BJ (cell line): ENCODE measurements at regions of chr7 and their contacts with region 1.

Region 1: GRCh38 chr7:32539919-32540531 is 44.7 kb downstream of the AVL9 start:
- DNase-seq: no peak
- H3K4me3 ChIP-seq: no peak overlapping the region
- H3K27me3 ChIP-seq: no peaks in the 10 kb centered on the region
- CTCF ChIP-seq: no peak

Region 2: DNA sequence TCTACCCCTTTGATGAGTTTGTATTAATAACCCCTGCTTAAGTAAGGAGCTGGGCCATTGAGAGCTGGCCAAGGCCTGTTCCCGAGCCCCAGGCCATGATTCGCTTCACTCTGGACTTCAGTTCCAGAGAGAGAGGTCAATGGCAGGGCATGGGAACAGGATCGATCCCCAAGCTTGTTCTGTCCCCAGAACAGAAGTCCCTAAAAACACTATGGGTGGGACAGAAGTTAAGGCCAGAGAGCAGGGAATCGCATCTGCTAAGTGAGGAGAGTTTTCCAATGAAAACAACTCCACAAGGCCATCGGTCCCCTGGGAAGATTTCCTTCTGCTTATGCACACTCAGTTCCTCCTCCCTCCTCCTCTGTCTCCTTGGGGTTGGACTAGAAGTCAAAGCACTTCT is 209.4 kb before region 1 on chr7:
- CTCF ChIA-PET with region 1: no interaction called
- POLR2A ChIA-PET with region 1: no interaction called
- DNase-seq: no peak
- H3K4me3 ChIP-seq: no peak overlapping the region
- H3K27me3 ChIP-seq: no peaks in the 10 kb centered on the region; the same call in 1 of the 2 replicates
- CTCF ChIP-seq: no peak

Region 3: GRCh38 chr7:32559480-32559879 is 19.5 kb after region 1 on chr7:
- CTCF ChIA-PET with region 1: interaction called, 11 read pairs
- POLR2A ChIA-PET with region 1: no interaction called
- DNase-seq: no peak
- H3K4me3 ChIP-seq: no peak overlapping the region
- H3K27me3 ChIP-seq: no peaks in the 10 kb centered on the region
- CTCF ChIP-seq: no peak